Left cardiac atrium (tissue), 4 donors: ENCODE measurements at regions of chr11 and their contacts with region 1.

Region 1: GRCh38 chr11:57761301-57762234 is at the start of gene CTNND1:
- DNase-seq: peak; percentile 89
- ATAC-seq: peak; percentile 99 to 100
- total RNA-seq, gene CTNND1: 75.2 to 82.0 TPM

Region 2: GRCh38 chr11:57778318-57779037 is 16.9 kb after region 1 on chr11:
- intact Hi-C with region 1: loop called in 1 of 2 experiments (anchors 2 kb)
- DNase-seq: peak; percentile 94
- ATAC-seq: peak; percentile 93 to 94